ENCODE measurements at regions of chr6 and their contacts with region 1.

Region 1: DNA sequence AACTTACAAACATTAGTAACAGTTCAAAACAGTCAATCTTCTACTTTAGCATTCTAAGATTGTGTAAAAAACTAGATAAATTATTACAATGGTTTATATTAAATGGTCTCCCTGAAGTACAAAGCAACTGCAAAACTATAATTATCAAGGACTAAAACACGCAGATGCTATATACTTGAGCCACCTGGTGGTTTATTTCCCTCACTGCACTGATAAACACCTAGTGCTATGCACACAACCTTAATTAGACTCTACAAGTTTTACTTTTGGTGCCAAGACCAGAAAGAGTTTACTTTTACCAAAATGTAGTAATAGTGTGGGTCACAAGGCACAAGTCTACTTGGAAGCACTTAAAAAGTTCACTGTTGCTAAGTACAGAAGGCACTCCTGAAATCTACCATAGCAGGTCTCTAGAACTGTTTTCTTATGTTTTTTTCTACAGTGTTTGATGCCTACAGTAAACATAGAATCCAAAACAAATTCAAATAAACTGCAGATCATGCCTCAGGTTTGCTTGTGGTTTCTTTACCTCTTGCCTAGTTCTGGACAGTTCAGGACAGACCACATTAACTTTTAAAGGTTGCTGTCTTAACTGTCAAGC is 49.2 kb downstream of the GMDS start:
- DNase-seq: no peak
- ATAC-seq: peak; percentile 83

Region 2: DNA sequence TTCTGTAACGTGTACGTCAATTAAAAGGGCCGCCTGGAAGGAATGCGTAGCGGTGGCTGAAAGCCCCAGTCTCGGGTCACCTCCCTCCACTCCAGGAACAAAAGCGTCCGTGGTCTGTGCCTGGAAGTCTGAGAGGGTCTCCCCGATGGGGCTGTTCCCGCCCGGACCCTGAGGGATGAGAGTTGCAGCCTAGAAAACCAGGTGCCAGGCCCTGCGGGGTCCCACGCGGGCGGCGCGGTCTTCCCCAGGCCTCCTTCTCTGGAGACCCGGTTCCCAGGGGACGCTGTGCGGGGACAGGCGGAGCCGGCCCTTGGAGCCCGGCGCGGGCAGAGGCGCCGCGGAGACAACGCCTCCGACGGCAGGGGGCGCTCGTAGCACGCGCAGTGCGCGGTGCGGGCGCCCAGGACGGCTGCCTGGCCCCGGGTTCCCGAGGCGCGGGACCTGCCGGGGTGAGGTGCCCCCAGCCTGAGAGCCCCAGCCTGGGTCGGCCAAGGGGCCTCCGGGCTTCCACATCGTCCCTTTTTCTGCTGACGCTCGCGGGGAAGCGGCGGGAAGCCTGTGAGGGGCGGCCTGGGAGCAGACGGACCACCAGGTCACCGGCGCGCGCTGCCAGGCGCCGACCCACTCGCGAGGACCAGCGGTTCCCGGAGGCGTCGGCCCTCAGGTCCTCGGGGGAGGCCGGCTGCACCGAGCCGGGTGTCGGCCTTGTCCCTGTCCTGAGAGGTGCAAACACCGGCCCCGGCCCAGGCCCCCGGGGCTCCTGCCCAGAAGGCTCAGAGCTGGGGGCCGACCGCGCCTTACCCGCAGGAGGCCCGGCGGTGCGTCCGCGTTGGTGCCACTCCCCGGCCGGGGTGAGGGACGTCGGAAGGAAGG is 591.8 kb before region 1 on chr6:
- intact Hi-C with region 1: loop called (anchors 5 kb)
- DNase-seq: peak; percentile 76
- ATAC-seq: peak; percentile 97

Region 3: GRCh38 chr6:2127484-2127911 is 68.7 kb before region 1 on chr6:
- intact Hi-C with region 1: loop called (anchors 10 kb)
- DNase-seq: peak; percentile 75
- ATAC-seq: peak; percentile 95